ENCODE measurements at regions of chr14 and their contacts with region 1.

Region 1: DNA sequence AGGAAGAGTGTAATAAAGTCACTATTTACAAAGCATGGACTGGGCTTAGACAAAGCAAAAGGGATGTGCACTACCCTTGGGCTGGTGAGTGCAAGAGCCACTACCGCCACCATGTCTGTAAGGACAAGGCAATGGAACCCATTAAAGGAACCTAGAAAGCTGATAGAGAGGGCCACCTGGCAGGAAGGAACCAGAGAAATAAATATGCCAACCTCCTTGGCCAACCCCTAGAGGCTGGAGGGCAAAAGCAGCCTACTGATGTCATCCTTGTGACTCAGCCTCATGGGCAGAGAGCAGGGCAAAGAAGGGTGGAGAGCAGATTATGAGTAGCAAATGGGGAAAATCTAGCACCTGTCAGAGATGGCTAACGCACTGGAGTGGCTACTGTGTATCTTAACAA is 59.4 kb upstream of the FUT8 start:
- DNase-seq: no peak
- H3K4me3 ChIP-seq: no peak overlapping the region
- H3K27ac ChIP-seq: peak overlapping the region in 5 of 59 donors; percentile 2 to 54 (median 11)
- H3K27me3 ChIP-seq: no peaks in the 10 kb centered on the region
- CTCF ChIP-seq: no peak

Region 2: DNA sequence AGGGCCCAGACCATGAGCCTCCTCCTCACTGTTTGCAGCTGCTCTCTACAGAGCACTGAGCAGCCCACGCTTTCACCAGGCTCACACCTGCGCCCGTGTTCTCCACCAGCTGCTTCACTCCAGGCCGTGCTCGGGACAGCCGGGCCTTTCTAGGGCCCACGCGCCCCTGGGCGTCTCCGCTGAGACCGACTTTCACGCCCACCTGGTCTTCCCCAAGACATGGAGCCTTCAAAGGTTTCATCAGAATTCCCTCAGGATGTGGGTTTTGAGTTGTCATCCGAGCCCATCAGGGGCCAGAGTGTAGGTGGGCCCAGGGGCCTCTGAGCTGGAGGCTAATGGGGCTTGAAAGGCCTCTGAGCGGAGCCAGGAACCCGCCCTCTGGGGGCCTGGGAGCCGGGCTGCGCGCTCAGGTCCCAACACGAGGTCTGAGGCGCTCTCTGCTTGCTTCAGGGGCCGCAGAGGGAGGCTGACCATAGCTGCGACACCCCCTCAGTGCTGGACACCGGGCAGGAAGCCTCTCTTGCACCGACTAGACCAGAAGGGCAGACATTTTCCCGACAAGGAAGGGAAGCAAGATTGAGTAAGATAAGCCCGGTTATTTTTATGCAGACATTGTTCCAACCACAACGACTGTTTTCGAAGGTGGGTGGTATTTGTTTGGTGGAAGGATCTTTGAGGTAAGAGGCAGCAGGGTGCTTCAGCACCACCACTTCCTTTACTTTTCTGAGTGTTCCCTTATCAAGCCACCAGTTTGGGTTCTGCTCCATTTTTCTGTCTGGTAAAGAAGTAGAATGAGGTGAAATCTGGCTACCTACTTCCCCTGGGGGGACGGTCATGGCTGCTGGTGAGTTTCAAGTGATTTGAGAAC is 65.6 kb before region 1 on chr14:
- intact Hi-C with region 1: loop called in 1 of 2 experiments (anchors 5 kb)
- DNase-seq: no peak
- H3K4me3 ChIP-seq: no peak overlapping the region
- H3K27ac ChIP-seq: peak overlapping the region in 30 of 59 donors; percentile 10 to 100 (median 97)
- H3K27me3 ChIP-seq: no peaks in the 10 kb centered on the region
- CTCF ChIP-seq: no peak

Region 3: GRCh38 chr14:65318636-65319506 is 34.2 kb before region 1 on chr14:
- intact Hi-C with region 1: loop called in 1 of 2 experiments (anchors 5 kb)
- DNase-seq: no peak
- H3K4me3 ChIP-seq: no peak overlapping the region
- H3K27ac ChIP-seq: no peak overlapping the region
- H3K27me3 ChIP-seq: no peaks in the 10 kb centered on the region
- CTCF ChIP-seq: no peak

Region 4: GRCh38 chr14:65412032-65412846 is 59.2 kb after region 1 on chr14 and contains the start of gene FUT8:
- intact Hi-C with region 1: no loop called
- DNase-seq: peak; percentile 88 to 97 (median 94)
- H3K4me3 ChIP-seq: peak within 1 kb of the TSS; percentile 66 to 99 (median 91)
- H3K27ac ChIP-seq: peak within 1 kb of the TSS; percentile 88 to 100 (median 98)
- H3K27me3 ChIP-seq: no peaks in the 10 kb centered on the region
- CTCF ChIP-seq: peak; percentile 17 to 85 (median 72)
- total RNA-seq, gene FUT8: 73.3 to 174 (median 107) TPM

Measured in dorsolateral prefrontal cortex (tissue), 120 donors.